Dendritic cell treated with granulocyte-macrophage colony-stimulating factor and Interleukin-4, amounts not matched to agents 40 ng/mL and 50 ng/mL, for 4 days (primary cell): ENCODE measurements at regions of chr11 and their contacts with region 1.

Region 1: GRCh38 chr11:18501629-18502028 is 25.1 kb downstream of the TSG101 start:
- H3K4me3 Mint-ChIP-seq: no peak overlapping the region
- H3K27ac Mint-ChIP-seq: no peak overlapping the region
- H3K4me1 Mint-ChIP-seq: no peaks in the 10 kb centered on the region
- H3K27me3 Mint-ChIP-seq: no peaks in the 10 kb centered on the region

Region 2: GRCh38 chr11:18352581-18352980 is 149.0 kb before region 1 on chr11:
- intact Hi-C with region 1: loop called (anchors 5 kb)
- H3K4me3 Mint-ChIP-seq: no peak overlapping the region
- H3K27ac Mint-ChIP-seq: no peak overlapping the region
- H3K4me1 Mint-ChIP-seq: no peaks in the 10 kb centered on the region
- H3K27me3 Mint-ChIP-seq: no peaks in the 10 kb centered on the region

Region 3: DNA sequence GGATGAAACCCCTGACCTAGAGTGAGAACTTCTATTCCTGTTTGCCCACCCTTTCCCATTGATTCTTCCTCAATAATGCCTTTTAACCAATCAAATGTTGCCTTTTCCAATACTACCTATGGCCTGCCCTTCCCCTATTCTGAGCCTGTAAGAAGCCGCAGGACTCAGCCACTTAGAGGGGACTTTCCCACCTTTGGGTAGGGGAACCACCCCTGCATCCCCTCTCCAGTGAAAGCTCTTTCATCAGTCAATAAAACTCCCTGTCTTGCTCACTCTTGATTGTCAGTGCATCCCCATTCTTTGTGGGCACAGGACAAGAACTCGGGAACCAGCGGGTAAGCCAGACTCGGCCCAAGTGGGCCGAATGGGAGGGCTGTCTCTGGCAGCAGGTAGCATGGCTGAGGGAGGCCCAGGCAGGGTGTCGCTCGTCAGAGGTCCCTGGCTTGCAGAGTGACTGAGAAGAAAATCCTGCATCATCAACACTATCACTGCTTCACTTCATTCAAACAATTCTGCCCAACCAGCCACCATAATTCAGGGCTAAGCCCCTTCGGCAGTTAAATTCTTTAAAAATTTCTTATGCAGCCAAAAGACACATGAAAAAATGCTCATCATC is 15.6 kb before region 1 on chr11:
- intact Hi-C with region 1: no loop called
- H3K4me3 Mint-ChIP-seq: no peak overlapping the region
- H3K27ac Mint-ChIP-seq: no peak overlapping the region
- H3K4me1 Mint-ChIP-seq: no peaks in the 10 kb centered on the region
- H3K27me3 Mint-ChIP-seq: no peaks in the 10 kb centered on the region